ENCODE measurements at regions of chr3 and their contacts with region 1.

Region 1: GRCh38 chr3:129087138-129087702 is 26.6 kb downstream of the GP9 start:
- DNase-seq: peak; percentile 82
- H3K4me3 ChIP-seq: no peak overlapping the region
- H3K27ac ChIP-seq: peak overlapping the region; percentile 72 to 85 (median 83)
- H3K4me1 ChIP-seq: peaks cover 0 to 12% (median 8%) of the 10 kb centered on the region in 4 donors
- H3K27me3 ChIP-seq: no peaks in the 10 kb centered on the region
- CTCF ChIP-seq: no peak
- EP300 ChIP-seq: no peak
- POLR2A ChIP-seq: no peak

Region 2: GRCh38 chr3:128969993-128970739 is 117.1 kb before region 1 on chr3:
- intact Hi-C with region 1: loop called (anchors 2 kb)
- DNase-seq: no peak
- H3K4me3 ChIP-seq: no peak overlapping the region
- H3K27ac ChIP-seq: no peak overlapping the region
- H3K4me1 ChIP-seq: peaks cover 0 to 25% (median 9%) of the 10 kb centered on the region in 4 donors
- H3K27me3 ChIP-seq: no peaks in the 10 kb centered on the region
- CTCF ChIP-seq: peak; percentile 68 to 90 (median 78)
- EP300 ChIP-seq: no peak
- POLR2A ChIP-seq: no peak

Region 3: GRCh38 chr3:129052675-129053074 is 34.5 kb before region 1 on chr3:
- intact Hi-C with region 1: loop called (anchors 5 kb)
- DNase-seq: no peak
- H3K4me3 ChIP-seq: no peak overlapping the region
- H3K27ac ChIP-seq: peak overlapping the region; percentile 60 to 73 (median 66)
- H3K4me1 ChIP-seq: peaks cover 0 to 23% (median 17%) of the 10 kb centered on the region in 4 donors
- H3K27me3 ChIP-seq: no peaks in the 10 kb centered on the region
- CTCF ChIP-seq: no peak
- EP300 ChIP-seq: no peak
- POLR2A ChIP-seq: no peak

Measured in sigmoid colon (tissue), 7 donors.